Heart left ventricle (tissue), 16 donors: ENCODE measurements at regions of chr16 and their contacts with region 1.

Region 1: DNA sequence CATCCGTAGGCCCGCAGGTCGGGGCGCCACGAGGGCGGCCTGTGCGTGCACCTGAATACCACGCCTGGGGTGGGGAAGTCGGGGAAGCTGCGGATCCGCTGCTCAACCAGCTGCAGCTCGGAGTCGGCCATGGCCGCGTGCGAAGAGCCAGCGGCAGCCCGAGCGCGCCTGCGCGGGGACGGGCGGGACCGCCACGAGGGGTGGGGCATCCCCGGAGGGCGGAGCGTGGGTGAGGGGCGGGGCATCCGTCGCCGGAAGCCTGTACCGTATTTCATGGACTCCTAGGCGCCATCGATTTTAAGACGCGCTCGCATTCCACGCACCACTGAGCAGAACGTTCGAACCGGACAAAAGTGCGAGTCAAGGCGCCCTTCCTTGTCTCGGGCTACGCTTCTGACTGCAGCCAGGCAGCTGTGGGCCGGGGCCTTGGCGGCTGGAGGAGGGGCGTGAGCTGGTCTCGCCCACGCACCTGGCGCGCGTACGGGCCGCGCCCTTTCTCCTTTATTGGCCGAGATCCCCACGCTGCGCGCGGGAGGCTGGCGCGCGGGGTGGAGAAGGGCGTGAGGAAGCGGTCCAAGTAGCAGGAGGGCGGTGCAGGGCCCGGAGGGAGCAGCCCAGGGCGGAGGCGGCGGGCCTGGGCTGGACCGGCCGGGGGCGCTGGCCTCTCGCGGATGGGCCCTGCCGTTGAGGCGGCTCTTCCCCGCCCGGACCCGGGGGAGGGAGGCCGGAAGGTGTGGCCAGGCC is at the start of gene APRT:
- DNase-seq: peak; percentile 95 to 99 (median 95)
- ATAC-seq: peak; percentile 86 to 93 (median 92)
- H3K4me3 ChIP-seq: peak within 1 kb of the TSS; percentile 41 to 88 (median 78)
- H3K27ac ChIP-seq: peak within 1 kb of the TSS; percentile 72 to 98 (median 92)
- H3K4me1 ChIP-seq: peaks cover 0 to 41% (median 24%) of the 10 kb centered on the region in 12 donors
- H3K27me3 ChIP-seq: no peaks in the 10 kb centered on the region
- CTCF ChIP-seq: peak; percentile 16 to 62 (median 42)
- POLR2A ChIP-seq: peak in 1 of 2 donors; percentile 73
- total RNA-seq, gene APRT: 26.6 to 75.8 (median 44.2) TPM

Region 2: GRCh38 chr16:88856828-88857733 is 45.1 kb after region 1 on chr16 and contains the starts of genes GALNS and TRAPPC2L:
- intact Hi-C with region 1: loop called in 5 of 10 experiments (anchors 1 to 10 kb)
- DNase-seq: peak; percentile 98 to 100 (median 99)
- ATAC-seq: peak; percentile 93 to 98 (median 98)
- H3K4me3 ChIP-seq: peak within 1 kb of the TSS; percentile 63 to 98 (median 90)
- H3K27ac ChIP-seq: peak within 1 kb of the TSS in 11 of 12 donors; percentile 53 to 86 (median 81)
- H3K4me1 ChIP-seq: peaks cover 0 to 52% (median 21%) of the 10 kb centered on the region in 12 donors
- H3K27me3 ChIP-seq: no peaks in the 10 kb centered on the region
- CTCF ChIP-seq: no peak
- POLR2A ChIP-seq: peak in 1 of 2 donors; percentile 88
- total RNA-seq, gene GALNS: 10.7 to 22.7 (median 13.3) TPM
- total RNA-seq, gene TRAPPC2L: 20.3 to 65.7 (median 44.2) TPM

Region 3: GRCh38 chr16:88941913-88942909 is 130.3 kb after region 1 on chr16:
- intact Hi-C with region 1: loop called in 5 of 10 experiments (anchors 5 to 10 kb)
- DNase-seq: peak in 3 of 5 donors; percentile 52 to 85 (median 61)
- ATAC-seq: peak in 3 of 4 donors; percentile 31 to 51 (median 48)
- H3K4me3 ChIP-seq: peak overlapping the region in 11 of 12 donors; percentile 11 to 86 (median 68)
- H3K27ac ChIP-seq: peak overlapping the region in 4 of 12 donors; percentile 29 to 95 (median 66)
- H3K4me1 ChIP-seq: peaks cover 9 to 39% (median 31%) of the 10 kb centered on the region in 12 donors
- H3K27me3 ChIP-seq: peaks cover 0 to 28% (median 7%) of the 10 kb centered on the region in 9 donors
- CTCF ChIP-seq: peak; percentile 42 to 95 (median 72)
- POLR2A ChIP-seq: no peak

Region 4: GRCh38 chr16:89171463-89172170 is 359.7 kb after region 1 on chr16 and contains the start of gene CDH15:
- intact Hi-C with region 1: loop called in 7 of 10 experiments (anchors 5 to 10 kb)
- DNase-seq: peak; percentile 85 to 95 (median 92)
- ATAC-seq: peak; percentile 91 to 96 (median 94)
- H3K4me3 ChIP-seq: peak within 1 kb of the TSS in 10 of 12 donors; percentile 5 to 44 (median 40)
- H3K27ac ChIP-seq: no peak within 1 kb of the TSS
- H3K4me1 ChIP-seq: peaks cover 0 to 20% (median 12%) of the 10 kb centered on the region in 12 donors
- H3K27me3 ChIP-seq: peaks cover 4 to 61% (median 29%) of the 10 kb centered on the region in 9 donors
- CTCF ChIP-seq: no peak
- POLR2A ChIP-seq: no peak
- total RNA-seq, gene CDH15: 0.16 to 0.32 TPM in 2 of 9 donors, not detected in the others

Region 5: GRCh38 chr16:89217388-89218191 is 405.6 kb after region 1 on chr16 and contains the start of gene ZNF778:
- intact Hi-C with region 1: loop called in 2 of 10 experiments (anchors 2 to 10 kb)
- DNase-seq: peak; percentile 84 to 91 (median 88)
- ATAC-seq: peak; percentile 88 to 97 (median 96)
- H3K4me3 ChIP-seq: peak within 1 kb of the TSS; percentile 62 to 100 (median 92)
- H3K27ac ChIP-seq: peak within 1 kb of the TSS; percentile 89 to 99 (median 95)
- H3K4me1 ChIP-seq: peaks cover 0 to 31% (median 20%) of the 10 kb centered on the region in 12 donors
- H3K27me3 ChIP-seq: no peaks in the 10 kb centered on the region
- CTCF ChIP-seq: no peak
- POLR2A ChIP-seq: peak; percentile 11 to 90
- total RNA-seq, gene ZNF778: 6.9 to 14.6 (median 9.9) TPM